GM10248 (cell line): ENCODE measurements at regions of chr6 and their contacts with region 1.

Region 1: GRCh38 chr6:52419809-52420670 is at the start of gene EFHC1:
- DNase-seq: peak; percentile 96
- CTCF ChIP-seq: no peak

Region 2: DNA sequence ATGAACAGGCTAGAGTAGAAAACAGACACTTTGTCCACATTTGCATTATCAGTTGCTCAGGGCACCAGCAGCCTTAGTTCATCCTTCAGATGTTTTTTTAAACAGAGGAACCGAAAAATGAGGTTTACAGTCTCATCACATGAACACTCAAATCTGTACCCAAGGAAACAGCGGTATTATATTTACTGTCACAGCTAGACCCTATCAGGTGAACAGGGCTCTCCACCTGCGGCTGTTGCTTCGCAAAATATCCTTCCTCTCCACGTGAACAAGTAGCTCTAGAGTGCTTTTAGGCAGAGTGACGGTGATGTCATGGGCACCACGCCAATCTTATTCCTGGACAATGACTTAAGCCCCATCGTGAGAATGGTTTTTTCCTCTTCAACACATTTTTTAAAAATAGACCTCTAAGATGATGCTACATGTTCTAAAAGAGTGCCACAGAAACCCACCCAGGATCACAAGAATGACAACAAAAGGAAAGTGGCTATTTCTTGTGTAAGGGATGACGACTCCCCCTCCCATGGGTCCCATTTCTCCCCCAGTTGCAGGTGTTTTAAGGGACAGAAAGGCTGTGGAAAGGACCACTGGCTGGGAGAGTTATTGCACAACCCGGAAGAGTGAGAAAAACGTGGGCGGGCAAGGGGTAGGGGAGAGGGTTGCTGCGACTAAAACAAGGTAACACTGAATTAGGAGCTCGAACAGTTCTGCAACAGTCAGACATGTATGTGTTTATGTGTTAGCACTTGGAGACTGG is 77.8 kb after region 1 on chr6:
- CTCF ChIA-PET with region 1: interaction called, 12 read pairs
- POLR2A ChIA-PET with region 1: no interaction called
- DNase-seq: peak; percentile 63
- CTCF ChIP-seq: no peak

Region 3: GRCh38 chr6:52577022-52577777 is 157.2 kb after region 1 on chr6 and contains the start of gene TRAM2:
- CTCF ChIA-PET with region 1: interaction called, 22 read pairs
- POLR2A ChIA-PET with region 1: no interaction called
- DNase-seq: peak; percentile 84
- CTCF ChIP-seq: no peak

Region 4: GRCh38 chr6:52598123-52598823 is 178.2 kb after region 1 on chr6:
- CTCF ChIA-PET with region 1: interaction called, 66 read pairs
- POLR2A ChIA-PET with region 1: no interaction called
- DNase-seq: no peak
- CTCF ChIP-seq: peak; percentile 39

Region 5: GRCh38 chr6:52664186-52664990 is 244.3 kb after region 1 on chr6:
- CTCF ChIA-PET with region 1: interaction called, 89 read pairs
- POLR2A ChIA-PET with region 1: no interaction called
- DNase-seq: peak; percentile 95
- CTCF ChIP-seq: no peak

Region 6: DNA sequence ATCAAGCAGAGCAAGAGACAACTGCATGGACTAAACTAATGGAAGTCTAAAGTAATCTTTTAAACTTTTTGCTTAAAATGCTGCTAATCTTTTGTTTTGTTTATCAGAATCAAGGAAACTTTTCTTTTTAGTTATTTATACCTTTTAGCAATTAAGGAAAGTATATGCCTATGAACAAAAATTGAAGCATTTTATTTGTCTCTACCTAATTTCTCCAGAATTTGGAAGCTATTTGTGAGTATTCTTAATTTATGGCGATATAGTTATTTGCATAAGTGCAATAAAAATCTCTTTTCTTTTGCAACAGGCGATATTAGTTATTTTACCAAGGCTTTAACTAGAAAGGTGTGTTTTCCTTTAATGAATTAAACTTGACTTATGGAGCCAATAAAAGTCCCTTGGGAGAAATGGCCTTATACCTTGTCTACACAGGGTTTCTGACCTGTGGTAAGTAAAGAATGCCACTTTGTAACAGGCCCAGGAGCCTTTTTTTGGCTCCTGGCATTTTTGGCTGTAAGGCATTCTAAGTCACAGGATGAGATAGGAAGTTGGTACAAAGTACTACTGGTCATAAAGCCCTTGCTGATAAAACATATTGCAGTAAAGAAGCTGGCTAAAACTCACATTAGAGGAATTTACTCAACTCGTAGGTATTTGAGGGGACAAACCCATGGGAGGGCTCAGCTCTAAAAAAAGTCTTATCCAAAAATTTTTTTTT is 288.1 kb after region 1 on chr6:
- CTCF ChIA-PET with region 1: no interaction called
- POLR2A ChIA-PET with region 1: no interaction called
- DNase-seq: no peak
- CTCF ChIP-seq: no peak